Activated B cell treated with CpG ODN at 0.5 μM for 24 hours (primary cell): ENCODE measurements at regions of chr6 and their contacts with region 1.

Region 1: GRCh38 chr6:34315780-34316179 is 67.0 kb upstream of the SMIM29 start:
- DNase-seq: no peak
- ATAC-seq: peak; percentile 79
- H3K4me3 Mint-ChIP-seq: peak overlapping the region; percentile 77
- H3K27ac Mint-ChIP-seq: peak overlapping the region; percentile 94
- H3K4me1 Mint-ChIP-seq: peaks cover 69% of the 10 kb centered on the region
- H3K27me3 Mint-ChIP-seq: no peaks in the 10 kb centered on the region
- CTCF ChIP-seq: no peak

Region 2: DNA sequence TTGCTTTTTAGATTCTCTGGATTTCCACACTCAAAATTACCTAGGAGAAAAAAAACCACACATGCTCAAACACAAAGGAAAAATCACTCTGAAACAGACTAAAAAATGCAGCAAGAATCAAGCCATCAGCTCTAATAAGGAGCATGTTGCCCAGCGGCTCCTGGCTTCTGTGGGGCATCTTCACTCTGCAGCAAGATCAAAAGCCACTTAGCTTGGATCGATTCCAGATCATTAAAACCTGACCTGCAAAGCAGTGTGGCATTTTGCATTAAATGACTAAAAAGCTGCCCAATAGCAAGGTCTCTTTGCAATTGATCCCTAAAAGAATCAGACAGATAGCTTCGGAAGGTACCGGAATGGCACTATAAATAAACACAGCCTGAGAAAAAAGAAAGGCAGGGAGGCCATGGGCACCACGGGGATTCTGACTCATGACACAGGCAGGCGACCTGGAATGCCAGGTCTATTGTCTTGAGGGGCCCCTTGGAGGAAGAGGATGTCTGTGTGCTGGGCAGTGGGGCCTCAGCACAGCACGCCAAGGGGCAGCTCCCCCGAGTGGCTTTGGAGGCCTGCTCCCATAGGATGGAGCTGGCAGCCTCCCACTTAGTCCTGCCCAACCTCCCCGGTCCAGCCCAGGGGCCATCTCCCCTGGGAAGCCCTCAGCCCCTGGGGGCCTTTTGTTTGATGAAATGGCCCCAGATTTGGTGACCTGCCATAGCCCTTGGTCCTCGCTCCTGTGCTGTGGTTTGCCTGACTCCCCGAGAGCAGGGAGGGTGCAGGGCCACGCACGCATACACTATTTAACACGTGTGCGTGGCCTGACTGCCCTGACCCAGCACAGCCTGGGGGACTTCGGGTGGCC is 534.4 kb before region 1 on chr6:
- CTCF ChIA-PET with region 1: no interaction called
- POLR2A ChIA-PET with region 1: no interaction called
- intact Hi-C with region 1: no loop called
- DNase-seq: no peak
- ATAC-seq: no peak
- H3K4me3 Mint-ChIP-seq: no peak overlapping the region
- H3K27ac Mint-ChIP-seq: no peak overlapping the region
- H3K4me1 Mint-ChIP-seq: peaks cover 24% of the 10 kb centered on the region
- H3K27me3 Mint-ChIP-seq: no peaks in the 10 kb centered on the region
- CTCF ChIP-seq: no peak

Region 3: GRCh38 chr6:33809594-33809993 is 506.2 kb before region 1 on chr6:
- CTCF ChIA-PET with region 1: no interaction called
- POLR2A ChIA-PET with region 1: no interaction called
- intact Hi-C with region 1: no loop called
- DNase-seq: no peak
- ATAC-seq: no peak
- H3K4me3 Mint-ChIP-seq: no peak overlapping the region
- H3K27ac Mint-ChIP-seq: no peak overlapping the region
- H3K4me1 Mint-ChIP-seq: peaks cover 8% of the 10 kb centered on the region
- H3K27me3 Mint-ChIP-seq: peaks cover 63% of the 10 kb centered on the region
- CTCF ChIP-seq: no peak

Region 4: GRCh38 chr6:34301408-34301807 is 14.4 kb before region 1 on chr6:
- CTCF ChIA-PET with region 1: no interaction called
- POLR2A ChIA-PET with region 1: interaction called, 6 read pairs
- intact Hi-C with region 1: loop called (anchors 2 kb)
- DNase-seq: no peak
- ATAC-seq: no peak
- H3K4me3 Mint-ChIP-seq: no peak overlapping the region
- H3K27ac Mint-ChIP-seq: peak overlapping the region; percentile 70
- H3K4me1 Mint-ChIP-seq: peaks cover 41% of the 10 kb centered on the region
- H3K27me3 Mint-ChIP-seq: no peaks in the 10 kb centered on the region
- CTCF ChIP-seq: no peak